Activated CD4-positive, alpha-beta T cell treated with anti-CD3 and anti-CD28 coated beads for 36 hours (primary cell): ENCODE measurements at regions of chr4 and their contacts with region 1.

Region 1: DNA sequence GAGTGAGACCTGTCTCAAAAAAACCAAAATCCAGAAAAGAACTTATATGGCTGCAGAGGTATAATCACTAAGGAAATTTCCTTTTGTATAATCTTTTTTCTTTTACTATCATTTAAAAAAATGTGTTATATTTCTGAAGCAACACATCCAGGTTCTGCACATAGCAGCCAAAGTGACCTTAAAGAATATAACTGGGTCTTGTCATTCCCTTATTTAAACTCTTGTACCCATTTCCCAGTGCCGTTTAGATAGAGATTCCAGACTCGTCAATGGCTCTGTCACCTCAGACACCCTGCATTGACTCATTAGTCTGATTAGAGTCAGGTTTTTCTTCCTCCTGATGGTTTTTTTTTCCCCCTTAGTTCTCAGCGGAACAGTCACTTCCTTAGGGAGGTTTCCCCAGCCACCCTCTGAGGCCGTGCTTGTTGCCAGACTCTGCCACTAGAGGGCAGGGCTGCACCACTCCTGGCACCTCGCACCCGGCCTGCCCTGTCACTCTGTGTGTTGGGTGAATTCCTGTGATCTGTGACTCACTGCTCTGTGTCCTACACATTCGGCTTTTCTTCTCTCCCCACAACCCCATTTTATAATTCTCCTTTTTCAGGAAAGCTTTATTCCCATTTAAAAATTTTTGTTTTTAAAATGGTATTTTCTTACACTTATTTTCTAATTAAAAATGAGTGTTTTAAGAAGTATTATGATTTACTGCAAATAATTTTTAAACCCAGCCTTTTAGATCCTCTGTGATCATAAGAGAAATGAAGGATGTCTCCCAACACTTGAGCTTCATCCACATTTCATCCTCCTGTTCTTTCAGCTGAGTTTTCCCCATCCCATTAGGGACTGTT is 32.1 kb downstream of the HTT start:
- DNase-seq: peak; percentile 95
- ATAC-seq: peak; percentile 100
- H3K4me3 Mint-ChIP-seq: no peak overlapping the region
- H3K27ac Mint-ChIP-seq: peak overlapping the region; percentile 25
- H3K4me1 Mint-ChIP-seq: peaks cover 18% of the 10 kb centered on the region
- H3K27me3 Mint-ChIP-seq: no peaks in the 10 kb centered on the region

Region 2: DNA sequence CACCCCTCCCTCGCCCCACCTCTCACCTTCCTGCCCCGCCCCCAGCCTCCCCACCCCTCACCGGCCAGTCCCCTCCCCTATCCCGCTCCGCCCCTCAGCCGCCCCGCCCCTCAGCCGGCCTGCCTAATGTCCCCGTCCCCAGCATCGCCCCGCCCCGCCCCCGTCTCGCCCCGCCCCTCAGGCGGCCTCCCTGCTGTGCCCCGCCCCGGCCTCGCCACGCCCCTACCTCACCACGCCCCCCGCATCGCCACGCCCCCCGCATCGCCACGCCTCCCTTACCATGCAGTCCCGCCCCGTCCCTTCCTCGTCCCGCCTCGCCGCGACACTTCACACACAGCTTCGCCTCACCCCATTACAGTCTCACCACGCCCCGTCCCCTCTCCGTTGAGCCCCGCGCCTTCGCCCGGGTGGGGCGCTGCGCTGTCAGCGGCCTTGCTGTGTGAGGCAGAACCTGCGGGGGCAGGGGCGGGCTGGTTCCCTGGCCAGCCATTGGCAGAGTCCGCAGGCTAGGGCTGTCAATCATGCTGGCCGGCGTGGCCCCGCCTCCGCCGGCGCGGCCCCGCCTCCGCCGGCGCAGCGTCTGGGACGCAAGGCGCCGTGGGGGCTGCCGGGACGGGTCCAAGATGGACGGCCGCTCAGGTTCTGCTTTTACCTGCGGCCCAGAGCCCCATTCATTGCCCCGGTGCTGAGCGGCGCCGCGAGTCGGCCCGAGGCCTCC is 32.3 kb before region 1 on chr4 and contains the starts of genes HTT and HTT-AS:
- CTCF ChIA-PET with region 1: no interaction called
- POLR2A ChIA-PET with region 1: no interaction called
- intact Hi-C with region 1: loop called in 1 of 2 experiments (anchors 1 kb)
- DNase-seq: peak; percentile 100
- ATAC-seq: peak; percentile 89
- H3K4me3 Mint-ChIP-seq: peak within 1 kb of the TSS; percentile 95
- H3K27ac Mint-ChIP-seq: peak within 1 kb of the TSS; percentile 90
- H3K4me1 Mint-ChIP-seq: peaks cover 24% of the 10 kb centered on the region
- H3K27me3 Mint-ChIP-seq: no peaks in the 10 kb centered on the region
- total RNA-seq, gene HTT: 80.1 to 127 TPM
- total RNA-seq, gene HTT-AS: not detected

Region 3: GRCh38 chr4:3091464-3091863 is 15.1 kb before region 1 on chr4:
- CTCF ChIA-PET with region 1: interaction called, 12 read pairs
- POLR2A ChIA-PET with region 1: no interaction called
- intact Hi-C with region 1: no loop called
- DNase-seq: no peak
- ATAC-seq: peak; percentile 45
- H3K4me3 Mint-ChIP-seq: no peak overlapping the region
- H3K27ac Mint-ChIP-seq: peak overlapping the region; percentile 45
- H3K4me1 Mint-ChIP-seq: peaks cover 30% of the 10 kb centered on the region
- H3K27me3 Mint-ChIP-seq: no peaks in the 10 kb centered on the region

Region 4: DNA sequence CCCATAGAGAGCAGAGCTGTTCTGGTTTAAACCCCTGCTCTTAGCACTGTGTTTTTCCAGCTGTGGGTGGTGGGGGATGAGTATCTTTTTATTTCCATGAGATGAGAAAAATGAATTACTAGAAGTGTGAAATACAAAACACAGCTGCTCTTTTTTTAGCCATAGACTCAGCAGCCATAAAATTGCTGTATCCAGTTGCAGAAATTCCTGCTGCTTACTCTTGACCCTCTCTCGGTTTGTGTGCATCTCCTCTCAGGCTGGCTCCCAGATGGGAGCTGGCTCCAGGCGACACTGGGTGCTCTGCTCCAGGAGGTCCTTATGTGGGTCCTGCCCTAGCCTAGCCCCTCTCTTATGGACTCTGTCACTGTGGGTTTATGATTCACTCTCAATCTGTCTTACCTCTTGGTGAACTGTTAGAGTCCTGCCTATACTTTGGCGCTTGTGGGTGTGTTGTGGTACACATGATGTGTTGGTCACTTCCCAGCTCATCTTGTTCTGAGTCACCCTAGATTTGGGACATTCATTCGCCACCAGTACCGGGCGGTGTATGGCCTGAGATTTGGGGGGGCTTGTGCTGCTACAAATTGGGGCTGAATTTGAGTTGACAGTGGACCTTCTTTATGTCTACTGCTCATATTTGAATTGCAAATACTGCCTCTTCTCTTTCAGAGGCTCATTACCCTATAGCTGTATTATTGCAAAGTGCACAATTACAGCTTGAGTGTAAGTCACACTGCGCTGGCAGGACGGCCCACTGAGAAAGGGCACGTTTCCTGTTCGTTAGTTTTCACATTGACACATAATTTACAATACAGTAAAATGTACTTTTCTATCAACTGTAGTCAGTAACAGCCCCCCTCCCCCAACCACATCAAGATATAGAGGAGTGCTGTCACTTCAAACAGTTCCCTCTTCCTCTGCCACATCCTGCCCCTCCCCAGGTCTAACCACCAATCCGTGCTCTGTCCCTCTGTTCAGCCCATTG is 95.4 kb after region 1 on chr4:
- CTCF ChIA-PET with region 1: interaction called, 6 read pairs
- POLR2A ChIA-PET with region 1: no interaction called
- intact Hi-C with region 1: loop called in 1 of 2 experiments (anchors 1 kb)
- DNase-seq: peak; percentile 82
- ATAC-seq: peak; percentile 92
- H3K4me3 Mint-ChIP-seq: peak overlapping the region; percentile 41
- H3K27ac Mint-ChIP-seq: peak overlapping the region; percentile 82
- H3K4me1 Mint-ChIP-seq: peaks cover 49% of the 10 kb centered on the region
- H3K27me3 Mint-ChIP-seq: no peaks in the 10 kb centered on the region

Region 5: GRCh38 chr4:3346146-3346545 is 239.6 kb after region 1 on chr4:
- CTCF ChIA-PET with region 1: interaction called, 4 read pairs
- POLR2A ChIA-PET with region 1: no interaction called
- intact Hi-C with region 1: loop called in 1 of 2 experiments (anchors 5 kb)
- DNase-seq: peak; percentile 50
- ATAC-seq: peak; percentile 92
- H3K4me3 Mint-ChIP-seq: no peak overlapping the region
- H3K27ac Mint-ChIP-seq: no peak overlapping the region
- H3K4me1 Mint-ChIP-seq: peaks cover 17% of the 10 kb centered on the region
- H3K27me3 Mint-ChIP-seq: no peaks in the 10 kb centered on the region

Region 6: DNA sequence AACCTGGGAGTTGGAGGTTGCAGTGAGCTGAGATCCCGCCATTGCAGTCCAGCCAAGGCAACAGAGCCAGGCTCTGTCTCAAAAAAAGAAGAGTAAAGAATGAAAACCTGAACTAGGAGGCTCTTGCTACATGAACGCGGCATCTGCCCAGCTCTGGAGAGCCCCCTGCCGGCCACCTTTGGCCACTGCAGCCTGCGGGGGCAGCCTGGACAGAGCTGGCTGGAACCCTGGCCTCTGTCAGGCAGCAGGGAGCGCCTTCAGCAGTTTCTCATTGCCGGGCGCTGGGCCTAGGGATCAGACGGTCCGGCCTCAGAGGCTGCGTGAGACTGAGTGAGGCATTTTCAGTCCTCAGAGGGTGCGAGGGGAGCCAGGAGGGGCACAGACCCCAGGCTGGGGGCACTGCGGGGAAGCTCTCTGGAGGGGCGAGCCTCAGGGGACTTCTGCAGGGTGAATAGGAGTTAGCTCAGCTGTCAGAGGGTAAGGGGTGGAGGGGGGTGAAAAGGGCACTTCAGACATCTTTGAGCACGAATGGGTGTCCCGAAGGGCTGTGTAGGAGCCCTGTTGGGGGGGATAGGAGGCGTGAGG is 374.1 kb after region 1 on chr4:
- CTCF ChIA-PET with region 1: interaction called, 3 read pairs
- POLR2A ChIA-PET with region 1: no interaction called
- intact Hi-C with region 1: loop called in 1 of 2 experiments (anchors 1 kb)
- DNase-seq: peak; percentile 87
- ATAC-seq: peak; percentile 87
- H3K4me3 Mint-ChIP-seq: no peak overlapping the region
- H3K27ac Mint-ChIP-seq: no peak overlapping the region
- H3K4me1 Mint-ChIP-seq: no peaks in the 10 kb centered on the region
- H3K27me3 Mint-ChIP-seq: peaks cover 14% of the 10 kb centered on the region

Region 7: DNA sequence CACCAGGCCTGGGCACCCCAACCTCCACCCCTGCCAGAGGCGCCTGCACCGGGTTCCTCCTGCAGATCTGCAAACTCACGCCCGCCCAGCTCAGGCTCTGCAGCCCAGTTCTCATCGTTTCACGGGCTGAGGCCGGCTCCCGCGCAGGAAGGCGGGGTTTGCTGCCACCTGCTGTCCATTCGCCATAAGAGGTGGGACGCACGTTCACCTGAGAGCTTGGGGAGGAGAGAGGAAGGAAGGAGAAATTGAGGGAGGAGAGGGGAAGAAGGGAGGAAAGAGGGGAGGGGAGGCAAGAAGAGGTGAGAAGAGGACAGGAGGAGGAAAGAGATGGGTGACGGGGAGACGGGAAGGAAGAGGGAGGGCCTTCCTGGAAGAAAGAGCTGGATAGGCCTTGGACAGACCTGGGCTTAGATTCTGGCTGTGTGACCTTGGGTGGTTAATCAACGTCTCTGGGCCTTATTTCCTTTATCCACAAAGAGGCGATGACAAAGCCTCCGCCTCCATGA is 774.1 kb after region 1 on chr4:
- CTCF ChIA-PET with region 1: no interaction called
- POLR2A ChIA-PET with region 1: no interaction called
- intact Hi-C with region 1: loop called in 1 of 2 experiments (anchors 2 kb)
- DNase-seq: peak; percentile 87
- ATAC-seq: peak; percentile 85
- H3K4me3 Mint-ChIP-seq: no peak overlapping the region
- H3K27ac Mint-ChIP-seq: no peak overlapping the region
- H3K4me1 Mint-ChIP-seq: peaks cover 11% of the 10 kb centered on the region
- H3K27me3 Mint-ChIP-seq: peaks cover 29% of the 10 kb centered on the region